Esophagus muscularis mucosa (tissue), 4 donors: ENCODE measurements at regions of chr16 and their contacts with region 1.

Region 1: GRCh38 chr16:30407102-30407803 is at the start of gene ZNF771:
- DNase-seq: peak; percentile 98
- H3K4me3 ChIP-seq: peak within 1 kb of the TSS; percentile 65 to 81 (median 68)
- H3K27ac ChIP-seq: peak within 1 kb of the TSS; percentile 81 to 94 (median 92)
- H3K4me1 ChIP-seq: peaks cover 23 to 38% (median 31%) of the 10 kb centered on the region in 4 donors
- H3K27me3 ChIP-seq: no peaks in the 10 kb centered on the region
- CTCF ChIP-seq: no peak
- EP300 ChIP-seq: no peak
- POLR2A ChIP-seq: no peak
- total RNA-seq, gene ZNF771: 20.1 to 25.3 (median 22.7) TPM

Region 2: GRCh38 chr16:30091474-30092372 is 315.5 kb before region 1 on chr16 and contains the start of gene TBX6:
- intact Hi-C with region 1: loop called (anchors 10 kb)
- DNase-seq: peak; percentile 98
- H3K4me3 ChIP-seq: peak within 1 kb of the TSS; percentile 56 to 62 (median 60)
- H3K27ac ChIP-seq: peak within 1 kb of the TSS; percentile 80 to 97 (median 94)
- H3K4me1 ChIP-seq: peaks cover 40 to 61% (median 56%) of the 10 kb centered on the region in 4 donors
- H3K27me3 ChIP-seq: no peaks in the 10 kb centered on the region
- CTCF ChIP-seq: peak; percentile 81 to 96 (median 84)
- EP300 ChIP-seq: no peak
- POLR2A ChIP-seq: no peak
- total RNA-seq, gene TBX6: 0.42 to 1.3 (median 0.67) TPM

Region 3: GRCh38 chr16:30355144-30355894 is 51.9 kb before region 1 on chr16 and contains the start of gene CD2BP2:
- intact Hi-C with region 1: loop called (anchors 10 kb)
- DNase-seq: peak; percentile 99
- H3K4me3 ChIP-seq: peak within 1 kb of the TSS; percentile 72 to 98 (median 80)
- H3K27ac ChIP-seq: peak within 1 kb of the TSS; percentile 90 to 99 (median 92)
- H3K4me1 ChIP-seq: peaks cover 39 to 58% (median 52%) of the 10 kb centered on the region in 4 donors
- H3K27me3 ChIP-seq: no peaks in the 10 kb centered on the region
- CTCF ChIP-seq: peak in 1 of 3 experiments; percentile 10
- EP300 ChIP-seq: no peak
- POLR2A ChIP-seq: peak; percentile 2
- total RNA-seq, gene CD2BP2: 24.9 to 63.9 (median 41.8) TPM

Region 4: DNA sequence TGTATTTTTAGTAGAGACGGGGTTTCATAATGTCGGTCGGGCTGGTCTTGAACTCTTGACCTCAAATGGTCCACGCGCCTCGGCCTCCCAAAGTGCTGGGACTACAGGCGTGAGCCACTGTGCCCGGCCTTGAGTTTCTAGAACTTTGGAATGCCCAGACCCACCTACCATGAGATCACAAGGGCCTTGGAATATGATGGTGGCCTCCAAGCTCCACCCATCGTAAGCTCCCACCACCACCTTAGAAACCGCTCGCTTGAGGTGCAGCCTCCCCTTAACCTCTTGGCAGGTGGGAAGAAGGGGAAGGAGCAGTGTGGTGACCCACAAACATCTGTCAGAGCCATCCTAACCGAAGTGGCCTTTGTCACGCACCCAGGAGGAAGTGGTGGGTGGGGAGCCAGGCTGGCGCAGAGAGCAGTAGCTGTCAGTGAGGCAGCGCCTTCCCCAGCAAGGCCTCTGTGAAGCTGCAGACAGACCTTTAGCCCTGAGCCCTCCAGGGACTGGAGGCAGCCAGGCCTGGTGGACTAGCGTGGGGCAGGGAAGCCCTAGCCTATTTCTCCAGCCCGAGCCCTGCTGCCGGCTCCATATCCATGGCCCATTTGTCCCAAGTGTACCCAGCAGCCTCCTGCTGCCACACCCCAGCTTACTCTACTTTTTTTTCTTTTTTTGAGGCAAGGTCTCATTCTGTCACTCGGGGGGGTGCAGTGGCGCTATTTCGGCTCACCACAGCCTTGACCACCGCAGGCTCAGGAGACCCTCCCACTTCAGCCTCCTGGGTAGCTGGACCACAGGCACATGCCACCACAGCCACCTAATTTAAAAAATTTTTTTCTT is 51.5 kb after region 1 on chr16:
- intact Hi-C with region 1: no loop called
- DNase-seq: peak; percentile 92
- H3K4me3 ChIP-seq: no peak overlapping the region
- H3K27ac ChIP-seq: no peak overlapping the region
- H3K4me1 ChIP-seq: no peaks in the 10 kb centered on the region
- H3K27me3 ChIP-seq: no peaks in the 10 kb centered on the region
- CTCF ChIP-seq: no peak
- EP300 ChIP-seq: no peak
- POLR2A ChIP-seq: no peak

Region 5: GRCh38 chr16:30491744-30492308 is 84.6 kb after region 1 on chr16:
- intact Hi-C with region 1: no loop called
- DNase-seq: no peak
- H3K4me3 ChIP-seq: no peak overlapping the region
- H3K27ac ChIP-seq: no peak overlapping the region
- H3K4me1 ChIP-seq: no peaks in the 10 kb centered on the region
- H3K27me3 ChIP-seq: peaks cover 0 to 29% (median 0%) of the 10 kb centered on the region in 4 donors
- CTCF ChIP-seq: no peak
- EP300 ChIP-seq: no peak
- POLR2A ChIP-seq: no peak

Region 6: GRCh38 chr16:30602616-30603277 is 195.5 kb after region 1 on chr16:
- intact Hi-C with region 1: no loop called
- DNase-seq: no peak
- H3K4me3 ChIP-seq: no peak overlapping the region
- H3K27ac ChIP-seq: peak overlapping the region in 1 of 4 donors; percentile 2
- H3K4me1 ChIP-seq: peaks cover 8 to 30% (median 16%) of the 10 kb centered on the region in 4 donors
- H3K27me3 ChIP-seq: no peaks in the 10 kb centered on the region
- CTCF ChIP-seq: no peak
- EP300 ChIP-seq: no peak
- POLR2A ChIP-seq: no peak